ENCODE measurements at regions of chr5 and their contacts with region 1.

Region 1: GRCh38 chr5:75511435-75512384 is at the starts of genes CERT1 and POLK:
- DNase-seq: peak; percentile 96
- H3K4me3 ChIP-seq: peak within 1 kb of the TSS; percentile 91
- H3K27ac ChIP-seq: peak within 1 kb of the TSS; percentile 60
- H3K4me1 ChIP-seq: peaks cover 50% of the 10 kb centered on the region
- CTCF ChIP-seq: no peak
- total RNA-seq, gene CERT1: 13.3 and 16.1 TPM in 2 replicates
- total RNA-seq, gene POLK: 16.0 and 20.1 TPM in 2 replicates

Region 2: DNA sequence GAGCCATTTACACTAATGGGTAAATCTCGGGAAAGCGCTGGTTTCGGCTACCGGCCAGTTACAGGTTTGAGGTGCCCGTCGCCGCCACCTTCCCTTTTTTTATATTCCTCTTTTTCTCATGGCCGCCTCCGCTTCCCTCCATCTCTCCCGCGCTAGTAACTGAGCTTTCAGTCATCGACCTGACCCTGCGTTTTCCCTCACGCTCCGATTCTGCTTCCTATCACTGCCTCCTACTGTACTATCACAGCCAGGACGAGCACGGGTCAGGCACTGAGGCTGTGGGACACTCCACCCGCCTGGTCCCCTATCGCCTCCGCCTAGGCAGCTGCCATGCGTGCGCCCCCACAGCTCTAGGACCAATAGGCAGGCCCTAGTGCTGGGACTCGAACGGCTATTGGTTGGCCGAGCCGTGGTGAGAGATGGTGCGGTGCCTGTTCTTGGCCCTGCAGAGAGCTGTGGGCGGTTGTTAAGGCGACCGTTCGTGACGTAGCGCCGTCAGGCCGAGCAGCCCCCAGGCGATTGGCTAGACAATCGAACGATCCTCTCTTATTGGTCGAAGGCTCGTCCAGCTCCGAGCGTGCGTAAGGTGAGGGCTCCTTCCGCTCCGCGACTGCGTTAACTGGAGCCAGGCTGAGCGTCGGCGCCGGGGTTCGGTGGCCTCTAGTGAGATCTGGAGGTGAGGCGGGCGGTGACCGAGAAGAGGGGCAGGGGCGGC is 174.9 kb before region 1 on chr5 and contains the start of gene HMGCR:
- CTCF ChIA-PET with region 1: no interaction called
- POLR2A ChIA-PET with region 1: interaction called, 6 read pairs
- intact Hi-C with region 1: loop called (anchors 2 kb)
- DNase-seq: peak; percentile 99
- H3K4me3 ChIP-seq: peak within 1 kb of the TSS; percentile 99
- H3K27ac ChIP-seq: peak within 1 kb of the TSS; percentile 74
- H3K4me1 ChIP-seq: peaks cover 31% of the 10 kb centered on the region
- CTCF ChIP-seq: peak; percentile 46; the same call in 1 of the 2 replicates
- total RNA-seq, gene HMGCR: 42.6 and 58.6 TPM in 2 replicates

Region 3: DNA sequence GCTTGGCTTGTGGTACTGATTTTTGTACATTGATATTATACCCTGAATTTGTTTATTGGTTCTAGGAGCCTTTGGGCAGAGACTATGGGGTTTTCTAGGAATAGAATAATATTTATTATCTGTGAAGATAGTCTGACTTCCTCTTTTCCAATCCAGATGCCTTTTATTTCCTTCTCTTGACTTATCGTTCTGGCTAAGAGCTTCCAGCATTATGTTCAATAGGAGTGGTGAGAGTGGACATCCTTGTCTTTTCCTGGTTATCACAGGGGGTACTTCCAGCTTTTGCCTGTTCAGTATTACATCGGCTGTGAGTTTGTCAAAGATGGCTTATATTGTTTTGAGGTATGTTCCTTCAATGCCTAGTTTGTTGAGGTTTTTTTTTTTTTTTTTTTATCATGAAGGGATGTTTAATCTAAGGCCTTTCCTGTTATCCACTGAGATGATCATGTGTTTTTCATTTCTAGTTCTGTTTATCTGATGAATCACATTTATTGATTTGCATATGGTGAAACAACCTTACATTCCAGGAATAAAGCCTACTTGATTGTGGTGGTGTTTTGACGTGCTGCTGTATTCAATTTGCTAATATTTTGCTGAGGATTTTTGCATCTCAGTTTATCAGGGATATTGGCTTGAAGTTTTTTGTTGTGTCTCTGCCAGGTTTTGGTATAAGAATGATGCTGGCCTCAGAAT is 77.8 kb before region 1 on chr5:
- CTCF ChIA-PET with region 1: no interaction called
- POLR2A ChIA-PET with region 1: no interaction called
- intact Hi-C with region 1: no loop called
- DNase-seq: no peak
- H3K4me3 ChIP-seq: no peak overlapping the region
- H3K27ac ChIP-seq: no peak overlapping the region
- H3K4me1 ChIP-seq: no peaks in the 10 kb centered on the region
- CTCF ChIP-seq: no peak

Region 4: GRCh38 chr5:75717082-75717922 is 205.6 kb after region 1 on chr5 and contains the start of gene POC5:
- CTCF ChIA-PET with region 1: no interaction called
- POLR2A ChIA-PET with region 1: no interaction called
- intact Hi-C with region 1: loop called (anchors 1 kb)
- DNase-seq: peak; percentile 97
- H3K4me3 ChIP-seq: peak within 1 kb of the TSS; percentile 97
- H3K27ac ChIP-seq: peak within 1 kb of the TSS; percentile 92
- H3K4me1 ChIP-seq: peaks cover 11% of the 10 kb centered on the region
- CTCF ChIP-seq: no peak
- total RNA-seq, gene POC5: 10.7 and 20.5 TPM in 2 replicates

Region 5: GRCh38 chr5:76165711-76166374 is 654.1 kb after region 1 on chr5:
- CTCF ChIA-PET with region 1: no interaction called
- POLR2A ChIA-PET with region 1: no interaction called
- intact Hi-C with region 1: no loop called
- DNase-seq: no peak
- H3K4me3 ChIP-seq: no peak overlapping the region
- H3K27ac ChIP-seq: no peak overlapping the region
- H3K4me1 ChIP-seq: no peaks in the 10 kb centered on the region
- CTCF ChIP-seq: no peak

Region 6: GRCh38 chr5:77239126-77239741 is 1727.5 kb after region 1 on chr5:
- CTCF ChIA-PET with region 1: no interaction called
- POLR2A ChIA-PET with region 1: no interaction called
- intact Hi-C with region 1: no loop called
- DNase-seq: peak; percentile 31
- H3K4me3 ChIP-seq: no peak overlapping the region
- H3K27ac ChIP-seq: no peak overlapping the region
- H3K4me1 ChIP-seq: no peaks in the 10 kb centered on the region
- CTCF ChIP-seq: peak; percentile 75

Measured in OCI-LY7 (cell line).